CD4-positive, alpha-beta T cell (primary cell): ENCODE measurements at regions of chr1 and their contacts with region 1.

Region 1: DNA sequence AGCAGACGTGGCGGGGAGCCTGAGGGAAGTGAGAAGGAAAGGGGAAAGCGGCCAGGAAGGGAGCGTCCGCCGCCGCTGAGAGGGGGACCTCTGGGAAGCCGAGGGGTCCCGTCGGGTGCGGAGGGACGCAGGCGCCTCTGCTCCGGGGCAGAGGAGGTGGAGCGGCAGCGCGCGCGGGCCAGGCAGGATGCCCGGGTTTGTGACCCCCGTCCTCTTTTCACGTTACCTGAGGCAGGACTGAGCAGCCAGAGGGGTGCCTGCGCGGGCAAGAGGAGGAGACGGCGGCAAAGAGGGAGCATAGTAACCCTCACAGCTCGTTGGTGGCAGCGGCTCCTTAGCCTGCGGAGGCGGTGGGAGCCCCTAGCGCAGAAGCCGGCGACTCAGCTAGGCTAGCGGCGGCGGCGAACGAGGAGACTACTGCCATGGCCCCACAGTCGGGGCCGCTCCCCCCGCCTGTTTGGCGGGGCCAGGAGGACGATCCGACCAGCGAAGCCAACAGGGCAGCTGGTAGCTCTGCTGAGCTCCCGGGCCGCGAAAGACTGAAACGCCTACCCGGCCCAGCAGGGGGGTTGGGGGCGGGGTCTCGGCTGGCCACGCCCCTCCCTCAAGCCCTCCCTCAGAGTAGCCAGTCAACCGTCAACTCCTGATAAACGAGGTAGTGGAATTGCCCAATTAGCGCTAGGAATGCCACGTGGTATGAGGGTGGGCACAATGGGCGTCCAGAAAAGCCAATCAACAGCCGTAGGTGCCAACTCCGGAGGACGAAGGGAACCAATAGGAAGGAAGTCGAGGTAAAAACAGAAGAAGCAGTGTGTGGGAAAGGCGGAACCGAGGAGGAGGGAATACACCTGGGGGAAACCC is at the start of gene TESK2:
- DNase-seq: peak; percentile 92 to 100 (median 95)
- ATAC-seq: peak; percentile 92
- H3K4me3 ChIP-seq: peak within 1 kb of the TSS; percentile 82
- H3K4me3 Mint-ChIP-seq: no peak within 1 kb of the TSS
- H3K27ac ChIP-seq: peak within 1 kb of the TSS; percentile 55 to 70
- H3K27ac Mint-ChIP-seq: no peak within 1 kb of the TSS
- H3K4me1 ChIP-seq: peaks cover 28% of the 10 kb centered on the region
- H3K4me1 Mint-ChIP-seq: peaks cover 5% of the 10 kb centered on the region
- H3K27me3 ChIP-seq: no peaks in the 10 kb centered on the region
- H3K27me3 Mint-ChIP-seq: no peaks in the 10 kb centered on the region
- CTCF ChIP-seq: no peak
- total RNA-seq, gene TESK2: 2.8 to 3.4 TPM

Region 2: GRCh38 chr1:44730741-44731512 is 759.9 kb before region 1 on chr1 and contains the start of gene RNU5D-1:
- CTCF ChIA-PET with region 1: interaction called, 5 read pairs
- POLR2A ChIA-PET with region 1: interaction called, 3 read pairs
- intact Hi-C with region 1: loop called (anchors 2 to 5 kb)
- DNase-seq: peak; percentile 87 to 98 (median 94)
- ATAC-seq: peak; percentile 76
- H3K4me3 ChIP-seq: peak within 1 kb of the TSS; percentile 46
- H3K4me3 Mint-ChIP-seq: peak within 1 kb of the TSS; percentile 68
- H3K27ac ChIP-seq: peak within 1 kb of the TSS; percentile 93 to 96
- H3K27ac Mint-ChIP-seq: peak within 1 kb of the TSS; percentile 97
- H3K4me1 ChIP-seq: peaks cover 33% of the 10 kb centered on the region
- H3K4me1 Mint-ChIP-seq: peaks cover 35% of the 10 kb centered on the region
- H3K27me3 ChIP-seq: no peaks in the 10 kb centered on the region
- H3K27me3 Mint-ChIP-seq: no peaks in the 10 kb centered on the region
- CTCF ChIP-seq: peak; percentile 77
- total RNA-seq, gene RNU5D-1: not detected

Region 3: GRCh38 chr1:45238846-45239245 is 252.0 kb before region 1 on chr1:
- CTCF ChIA-PET with region 1: no interaction called
- POLR2A ChIA-PET with region 1: no interaction called
- intact Hi-C with region 1: no loop called
- DNase-seq: no peak
- ATAC-seq: no peak
- H3K4me3 ChIP-seq: no peak overlapping the region
- H3K4me3 Mint-ChIP-seq: no peak overlapping the region
- H3K27ac ChIP-seq: no peak overlapping the region
- H3K27ac Mint-ChIP-seq: no peak overlapping the region
- H3K4me1 ChIP-seq: no peaks in the 10 kb centered on the region
- H3K4me1 Mint-ChIP-seq: no peaks in the 10 kb centered on the region
- H3K27me3 ChIP-seq: no peaks in the 10 kb centered on the region
- H3K27me3 Mint-ChIP-seq: peaks cover 4% of the 10 kb centered on the region
- CTCF ChIP-seq: no peak

Region 4: GRCh38 chr1:45359882-45360513 is 130.9 kb before region 1 on chr1:
- CTCF ChIA-PET with region 1: interaction called, 8 read pairs
- POLR2A ChIA-PET with region 1: interaction called, 8 read pairs
- intact Hi-C with region 1: loop called (anchors 1 kb)
- DNase-seq: peak; percentile 23 to 74 (median 38)
- ATAC-seq: peak; percentile 55
- H3K4me3 ChIP-seq: no peak overlapping the region
- H3K4me3 Mint-ChIP-seq: no peak overlapping the region
- H3K27ac ChIP-seq: no peak overlapping the region
- H3K27ac Mint-ChIP-seq: no peak overlapping the region
- H3K4me1 ChIP-seq: peaks cover 2% of the 10 kb centered on the region
- H3K4me1 Mint-ChIP-seq: peaks cover 4% of the 10 kb centered on the region
- H3K27me3 ChIP-seq: no peaks in the 10 kb centered on the region
- H3K27me3 Mint-ChIP-seq: no peaks in the 10 kb centered on the region
- CTCF ChIP-seq: peak; percentile 67

Region 5: DNA sequence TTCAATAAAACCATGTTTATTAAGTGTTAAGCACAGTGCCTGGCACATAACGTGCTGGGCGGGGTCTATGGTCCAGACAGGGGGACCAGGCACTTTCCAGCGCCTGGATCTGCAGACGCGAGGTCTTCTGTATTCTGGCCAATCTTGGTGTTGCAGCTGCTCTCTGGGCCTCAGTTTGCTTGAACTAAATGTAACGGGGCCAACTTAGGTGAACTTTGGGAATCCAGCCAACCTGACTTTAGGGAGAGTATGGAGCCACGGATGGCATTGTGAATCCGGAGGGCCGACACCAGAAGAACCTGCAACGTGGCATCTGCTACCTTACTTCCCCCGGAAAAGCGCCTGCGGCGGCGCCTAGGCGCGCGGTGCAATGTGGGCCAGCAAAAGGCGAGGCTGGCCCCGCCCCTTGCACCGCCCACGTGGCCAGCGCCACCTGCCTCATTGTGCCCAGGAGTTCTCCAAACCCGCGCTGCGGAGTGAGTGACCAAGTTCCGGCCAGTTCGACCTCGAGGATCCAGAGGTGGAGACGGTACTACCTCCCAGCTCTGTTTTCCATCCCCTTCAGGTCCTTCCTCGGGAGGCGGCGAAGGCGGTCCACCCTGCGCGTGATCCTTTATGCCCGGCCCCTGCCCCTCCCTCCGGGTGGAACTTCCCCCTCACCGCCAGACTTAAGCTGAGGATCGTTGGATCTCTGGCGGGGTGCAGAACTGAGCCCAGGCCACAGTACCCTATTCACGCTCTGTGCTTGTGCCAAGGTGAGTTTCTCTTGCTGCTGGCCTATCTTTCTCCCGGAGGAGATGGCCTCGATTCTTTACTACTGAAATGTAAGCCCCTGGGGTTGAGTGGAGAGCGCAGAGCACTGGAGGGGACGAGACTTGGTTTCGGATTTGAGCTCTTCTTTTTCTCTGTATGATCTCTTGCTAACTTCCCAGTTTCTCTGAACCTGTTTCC is 59.8 kb after region 1 on chr1 and contains the start of gene AKR1A1:
- CTCF ChIA-PET with region 1: interaction called, 4 read pairs
- POLR2A ChIA-PET with region 1: interaction called, 6 read pairs
- intact Hi-C with region 1: loop called in 1 of 2 experiments (anchors 2 kb)
- DNase-seq: peak; percentile 70 to 94 (median 84)
- ATAC-seq: peak; percentile 95
- H3K4me3 ChIP-seq: peak within 1 kb of the TSS; percentile 73
- H3K4me3 Mint-ChIP-seq: peak within 1 kb of the TSS; percentile 98
- H3K27ac ChIP-seq: peak within 1 kb of the TSS; percentile 85 to 90
- H3K27ac Mint-ChIP-seq: peak within 1 kb of the TSS; percentile 89
- H3K4me1 ChIP-seq: peaks cover 27% of the 10 kb centered on the region
- H3K4me1 Mint-ChIP-seq: peaks cover 26% of the 10 kb centered on the region
- H3K27me3 ChIP-seq: no peaks in the 10 kb centered on the region
- H3K27me3 Mint-ChIP-seq: no peaks in the 10 kb centered on the region
- CTCF ChIP-seq: no peak
- total RNA-seq, gene AKR1A1: 25.3 to 31.0 TPM